ENCODE measurements at regions of chr14 and their contacts with region 1.

Region 1: GRCh38 chr14:35416108-35416750 is 11.7 kb upstream of the NFKBIA start:
- DNase-seq: no peak
- ATAC-seq: no peak

Region 2: DNA sequence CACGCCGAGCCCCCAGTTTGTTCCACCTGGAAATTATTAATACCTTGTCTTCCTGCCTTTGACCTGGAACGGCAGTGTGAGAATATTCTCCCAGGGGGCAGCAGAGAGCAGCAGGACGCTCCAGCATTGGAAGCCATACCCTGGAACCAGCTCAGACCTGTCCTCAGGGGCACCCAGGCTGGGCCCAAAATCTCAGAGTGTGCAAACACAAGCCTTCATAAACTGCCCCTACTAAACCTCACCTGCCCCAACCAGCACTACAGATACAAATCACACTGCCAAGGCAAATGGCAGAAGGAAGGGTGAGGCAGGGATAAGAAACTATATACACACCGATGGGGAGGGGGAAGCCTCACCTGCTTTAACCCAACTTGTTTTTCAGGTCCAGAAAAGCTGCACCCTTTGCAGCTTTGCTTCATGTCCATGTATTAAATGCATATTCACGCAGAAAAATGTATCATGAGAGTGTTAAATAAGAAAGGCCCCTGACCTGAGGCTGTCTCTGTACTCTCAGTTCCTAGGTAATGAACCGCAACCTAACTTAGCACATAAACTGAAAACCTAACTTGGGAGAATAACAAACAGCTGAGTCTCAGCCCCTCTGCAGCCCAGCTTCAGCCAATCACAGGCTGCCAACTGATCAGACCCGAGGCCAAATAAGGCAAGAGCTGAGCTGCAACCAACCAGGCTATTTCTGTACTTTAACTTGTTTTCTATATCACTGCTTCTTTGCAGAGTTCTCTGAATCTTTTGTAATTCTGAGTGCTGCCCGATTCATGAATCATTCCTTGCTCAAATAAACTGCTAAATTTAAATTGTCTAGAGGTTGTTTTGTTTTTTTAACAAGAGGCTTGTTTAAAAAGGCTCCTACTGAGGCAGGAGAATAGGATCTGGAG is 1084.3 kb before region 1 on chr14:
- intact Hi-C with region 1: loop called in 1 of 2 experiments (anchors 10 kb)
- DNase-seq: peak; percentile 57
- ATAC-seq: peak; percentile 80 to 86

Region 3: DNA sequence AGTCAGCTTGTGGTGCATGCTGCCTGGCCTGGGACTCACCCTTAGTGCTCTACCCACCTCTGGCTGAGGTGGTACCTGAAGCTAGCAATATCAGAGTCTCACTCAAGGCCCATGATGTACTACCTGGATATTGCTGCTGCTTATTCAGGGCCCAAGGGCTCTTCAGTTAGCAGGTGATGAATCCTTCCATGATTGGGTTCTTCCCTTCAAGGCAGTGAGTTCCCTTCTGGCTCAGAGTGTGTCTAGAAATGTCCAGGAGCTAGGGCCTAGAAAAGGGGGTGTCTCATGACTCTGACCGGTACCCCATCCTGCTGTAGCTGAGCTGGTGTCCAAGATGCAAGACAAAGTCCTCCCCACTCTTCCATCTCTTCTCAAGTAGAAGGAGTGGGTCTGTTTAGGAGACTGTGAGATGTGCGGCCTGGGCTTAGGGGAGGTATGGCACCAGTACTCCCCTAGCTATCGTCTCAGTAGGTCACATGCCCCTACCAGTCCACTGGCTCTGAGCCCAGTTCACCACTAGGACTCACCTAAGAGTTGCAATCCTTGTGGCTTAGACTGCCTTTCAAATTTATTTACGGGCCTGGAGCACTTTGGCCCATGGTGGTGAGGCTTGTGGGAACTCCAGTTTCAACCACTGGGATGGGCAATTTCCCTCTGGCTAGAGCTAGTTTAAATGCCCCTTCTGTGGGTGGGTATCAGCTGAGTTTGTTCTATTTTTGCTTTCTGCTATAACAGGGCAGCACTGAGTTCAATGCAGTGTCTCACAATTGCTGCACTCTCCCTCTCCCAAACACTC is 281.7 kb before region 1 on chr14:
- intact Hi-C with region 1: loop called in 1 of 2 experiments (anchors 5 kb)
- DNase-seq: no peak
- ATAC-seq: no peak

Region 4: GRCh38 chr14:35140718-35141581 is 275.3 kb before region 1 on chr14:
- intact Hi-C with region 1: loop called (anchors 5 kb)
- DNase-seq: no peak
- ATAC-seq: no peak

Region 5: DNA sequence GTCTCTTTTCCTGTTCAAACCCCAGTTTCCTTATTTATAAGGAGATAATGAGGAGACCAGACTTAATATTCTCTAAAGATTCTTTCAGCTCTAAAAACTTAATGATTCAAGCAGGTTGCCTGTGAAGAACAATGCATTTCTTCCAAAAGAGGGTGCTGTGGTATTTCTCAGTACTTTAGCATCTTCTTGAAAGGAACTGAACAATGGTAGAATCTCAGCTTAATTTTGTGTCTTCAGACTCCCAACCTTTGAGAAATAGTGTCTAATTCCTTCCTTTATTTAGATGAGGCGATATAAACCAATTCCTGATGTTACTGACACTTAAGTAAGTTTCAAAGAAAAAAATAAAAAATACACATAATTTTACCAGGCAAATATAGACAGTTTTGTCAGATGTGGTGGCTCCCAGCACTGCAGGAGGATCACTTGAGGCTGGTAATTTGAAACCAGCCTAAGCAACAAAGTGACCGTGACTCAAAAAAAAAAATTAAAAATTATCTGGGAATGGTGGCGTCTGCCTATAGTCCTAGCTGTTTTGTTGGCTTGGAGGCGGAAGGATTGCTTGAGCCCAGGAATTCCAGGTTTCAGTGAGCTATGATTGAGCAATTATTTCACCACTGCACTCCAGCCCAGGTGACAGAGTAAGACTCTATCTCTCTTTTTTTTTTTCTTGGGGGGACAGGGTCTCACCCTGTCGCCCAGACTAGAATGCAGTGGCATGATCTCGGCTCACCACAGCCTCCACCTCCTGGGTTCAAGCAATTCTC is 200.9 kb before region 1 on chr14:
- intact Hi-C with region 1: loop called (anchors 2 to 10 kb)
- DNase-seq: no peak
- ATAC-seq: peak; percentile 41 to 75

Region 6: GRCh38 chr14:35470755-35471154 is 54.5 kb after region 1 on chr14:
- intact Hi-C with region 1: no loop called
- DNase-seq: no peak
- ATAC-seq: no peak